Calu3 (cell line): ENCODE measurements at regions of chr7 and their contacts with region 1.

Region 1: GRCh38 chr7:87564289-87564963 is 36.3 kb downstream of the ABCB1 start:
- DNase-seq: peak; percentile 69
- H3K4me3 Mint-ChIP-seq: no peak overlapping the region
- H3K27ac Mint-ChIP-seq: no peak overlapping the region
- H3K4me1 Mint-ChIP-seq: peaks cover 8% of the 10 kb centered on the region
- H3K27me3 Mint-ChIP-seq: no peaks in the 10 kb centered on the region
- CTCF ChIP-seq: peak; percentile 33

Region 2: GRCh38 chr7:87506246-87507180 is 57.9 kb before region 1 on chr7:
- CTCF ChIA-PET with region 1: no interaction called
- intact Hi-C with region 1: loop called (anchors 5 kb)
- DNase-seq: no peak
- H3K4me3 Mint-ChIP-seq: no peak overlapping the region
- H3K27ac Mint-ChIP-seq: no peak overlapping the region
- H3K4me1 Mint-ChIP-seq: no peaks in the 10 kb centered on the region
- H3K27me3 Mint-ChIP-seq: no peaks in the 10 kb centered on the region
- CTCF ChIP-seq: peak; percentile 19

Region 3: DNA sequence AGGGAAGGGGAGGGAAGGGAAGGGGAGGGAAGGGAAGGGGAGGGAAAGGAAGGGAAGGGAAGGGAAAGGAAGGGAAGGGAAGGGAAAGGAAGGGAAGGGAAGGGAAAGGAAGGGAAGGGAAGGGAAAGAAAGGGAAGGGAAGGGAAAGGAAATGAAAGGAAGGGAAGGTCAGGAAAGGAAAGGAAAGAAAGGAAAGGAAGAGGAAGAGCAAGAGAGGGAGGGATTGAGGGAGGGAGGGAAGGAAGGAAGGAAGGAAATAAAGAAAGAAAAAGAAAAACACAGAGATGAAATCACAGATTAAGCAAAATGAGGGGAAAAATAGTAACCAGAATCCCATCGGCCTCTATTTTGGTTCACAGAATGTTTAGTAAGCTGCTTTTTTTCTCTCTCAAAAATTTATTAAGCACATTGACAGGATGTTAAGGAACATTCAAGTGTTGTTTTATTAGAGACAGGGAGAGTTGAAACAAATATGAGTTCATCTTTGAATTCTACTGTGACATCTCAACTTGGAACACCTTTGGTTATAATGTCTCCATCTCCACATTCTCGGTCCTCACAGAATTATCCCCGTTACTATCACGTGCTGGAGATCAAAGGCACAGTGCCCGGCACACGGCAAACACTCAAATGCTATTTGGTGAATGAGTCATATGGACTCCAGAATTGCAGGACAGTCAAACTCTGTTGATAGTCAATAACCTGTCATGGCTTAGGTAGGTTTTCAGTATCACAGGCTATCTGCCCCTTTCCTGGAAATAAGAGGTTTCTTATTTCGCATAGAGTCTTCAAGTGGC is 16.1 kb before region 1 on chr7:
- CTCF ChIA-PET with region 1: no interaction called
- intact Hi-C with region 1: no loop called
- DNase-seq: no peak
- H3K4me3 Mint-ChIP-seq: no peak overlapping the region
- H3K27ac Mint-ChIP-seq: no peak overlapping the region
- H3K4me1 Mint-ChIP-seq: no peaks in the 10 kb centered on the region
- H3K27me3 Mint-ChIP-seq: no peaks in the 10 kb centered on the region
- CTCF ChIP-seq: no peak

Region 4: GRCh38 chr7:87600130-87601124 is 36.0 kb after region 1 on chr7 and contains the start of gene ABCB1:
- CTCF ChIA-PET with region 1: interaction called, 5 read pairs
- intact Hi-C with region 1: loop called (anchors 2 kb)
- DNase-seq: peak; percentile 21
- H3K4me3 Mint-ChIP-seq: peak within 1 kb of the TSS; percentile 82
- H3K27ac Mint-ChIP-seq: no peak within 1 kb of the TSS
- H3K4me1 Mint-ChIP-seq: peaks cover 15% of the 10 kb centered on the region
- H3K27me3 Mint-ChIP-seq: peaks cover 33% of the 10 kb centered on the region
- CTCF ChIP-seq: no peak
- total RNA-seq, gene ABCB1: 5.7 and 15.8 TPM in 2 replicates

Region 5: GRCh38 chr7:87608443-87608842 is 44.0 kb after region 1 on chr7:
- CTCF ChIA-PET with region 1: no interaction called
- intact Hi-C with region 1: loop called (anchors 2 kb)
- DNase-seq: no peak
- H3K4me3 Mint-ChIP-seq: no peak overlapping the region
- H3K27ac Mint-ChIP-seq: no peak overlapping the region
- H3K4me1 Mint-ChIP-seq: peaks cover 9% of the 10 kb centered on the region
- H3K27me3 Mint-ChIP-seq: peaks cover 9% of the 10 kb centered on the region
- CTCF ChIP-seq: no peak